ENCODE measurements at regions of chr4 and their contacts with region 1.

Region 1: DNA sequence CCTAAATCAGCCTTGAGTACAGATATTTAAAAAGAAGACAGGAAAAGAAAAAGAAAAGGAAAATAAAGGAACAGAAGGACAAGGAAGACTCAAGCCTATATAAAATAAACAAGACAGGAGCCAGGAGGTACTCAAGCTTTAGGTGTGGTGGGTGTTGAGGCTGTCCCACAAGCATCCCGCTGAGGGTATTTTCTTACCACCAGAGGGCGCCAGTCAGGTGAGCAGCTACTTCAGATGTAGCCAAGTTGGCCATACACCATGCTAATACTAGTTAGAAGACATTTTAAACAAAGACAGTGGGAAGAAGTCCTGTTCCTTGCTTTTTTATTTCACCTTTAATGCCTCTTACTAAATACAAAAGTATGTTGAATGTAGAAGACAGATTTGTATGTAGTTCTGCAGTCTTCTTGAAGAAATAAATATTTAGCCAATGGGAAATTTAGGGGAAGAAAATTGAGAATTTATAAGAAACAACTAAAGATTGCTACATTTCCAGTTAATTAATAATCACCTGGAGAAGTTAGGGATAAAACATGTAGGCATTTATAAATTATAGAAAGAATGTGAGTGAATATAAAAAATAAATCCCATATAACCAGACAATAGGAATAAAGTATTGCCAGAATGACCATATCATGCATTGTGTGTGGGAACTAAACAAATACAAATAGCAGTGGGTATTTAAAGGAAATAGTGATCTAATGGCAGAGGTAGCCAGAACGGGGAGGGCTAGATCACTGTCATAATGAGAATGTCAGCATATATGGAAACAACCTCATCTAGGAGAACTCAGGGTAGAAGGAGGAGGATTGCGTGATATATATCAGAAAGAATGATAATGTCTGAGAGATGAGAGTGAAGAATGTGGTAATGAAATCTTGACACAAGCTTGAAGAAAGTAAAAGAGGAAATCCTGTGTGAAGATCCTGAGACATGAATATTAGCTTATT is 71.0 kb downstream of the MTHFD2L start:
- DNase-seq: peak; percentile 31
- CTCF ChIP-seq: peak; percentile 73

Region 2: DNA sequence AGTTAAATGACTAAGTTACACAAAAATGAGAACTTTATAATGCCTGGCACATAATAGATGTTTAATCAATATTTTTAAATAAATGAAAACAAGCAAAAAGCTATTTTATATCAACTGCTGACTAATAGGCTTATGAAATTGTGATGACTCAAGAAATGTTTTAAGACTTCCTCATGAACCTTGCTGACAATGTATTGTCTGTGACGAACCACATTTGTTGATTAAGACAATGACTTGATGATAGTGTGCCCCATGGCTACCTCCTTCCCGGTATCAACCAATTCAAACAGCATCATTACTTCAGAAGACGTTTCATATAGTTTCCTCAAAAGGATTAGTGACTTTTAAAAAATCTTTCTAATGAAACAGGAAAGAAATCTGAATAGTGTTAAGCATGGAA is 384.6 kb before region 1 on chr4:
- CTCF ChIA-PET with region 1: no interaction called
- POLR2A ChIA-PET with region 1: no interaction called
- DNase-seq: no peak
- CTCF ChIP-seq: no peak

Region 3: GRCh38 chr4:74189331-74190043 is 39.5 kb before region 1 on chr4:
- CTCF ChIA-PET with region 1: interaction called, 12 read pairs
- POLR2A ChIA-PET with region 1: interaction called, 7 read pairs
- DNase-seq: peak; percentile 29
- CTCF ChIP-seq: peak; percentile 60

Region 4: DNA sequence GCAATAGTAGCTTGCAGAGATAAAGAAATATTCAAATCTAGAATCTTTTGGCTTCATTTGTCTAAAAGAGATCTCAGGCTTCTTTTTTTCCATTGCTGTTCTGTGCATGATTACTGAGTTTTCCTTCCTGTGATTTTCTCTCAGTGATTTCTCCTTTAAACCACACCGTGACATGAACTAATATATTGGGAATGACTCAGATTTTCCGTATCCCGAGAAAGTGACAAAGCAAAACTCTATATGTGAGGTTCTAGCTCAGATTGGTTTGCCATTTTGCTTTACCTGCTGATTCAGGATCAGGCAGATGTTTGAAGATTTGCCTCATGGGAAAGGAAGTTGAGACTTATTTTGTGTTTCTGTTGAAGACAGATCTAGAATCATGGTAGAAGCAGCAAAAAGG is 11.6 kb before region 1 on chr4:
- CTCF ChIA-PET with region 1: interaction called, 44 read pairs
- POLR2A ChIA-PET with region 1: no interaction called
- DNase-seq: no peak
- CTCF ChIP-seq: no peak

Region 5: DNA sequence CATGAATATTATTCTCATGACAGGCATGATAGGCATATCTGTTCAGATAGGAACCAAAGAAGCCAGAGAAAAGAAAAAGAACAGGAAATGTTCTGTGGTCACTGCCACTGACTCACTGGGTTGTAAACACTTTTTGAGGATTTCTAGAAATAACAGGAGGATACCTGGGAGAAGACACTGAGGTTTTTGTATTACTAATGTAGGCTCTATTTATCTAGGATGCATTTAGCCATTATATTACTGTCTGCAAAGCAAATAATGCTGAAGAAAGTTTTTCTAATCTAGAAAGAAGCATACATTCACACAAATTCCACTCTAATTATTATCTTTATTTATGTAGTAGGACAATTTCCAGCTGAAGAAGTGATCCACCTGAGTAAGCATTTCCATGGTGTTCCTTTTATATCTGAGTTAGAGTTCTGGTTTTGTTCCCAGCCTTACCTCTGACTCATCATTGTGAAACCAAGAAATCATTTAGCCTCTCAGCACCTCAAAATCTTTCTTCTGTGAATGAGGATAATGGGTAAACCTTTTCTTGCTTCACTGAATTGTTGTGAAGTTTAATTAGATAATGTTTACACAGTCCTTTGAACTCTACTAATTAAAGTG is 39.1 kb after region 1 on chr4:
- CTCF ChIA-PET with region 1: interaction called, 21 read pairs
- POLR2A ChIA-PET with region 1: no interaction called
- DNase-seq: no peak
- CTCF ChIP-seq: no peak

Region 6: DNA sequence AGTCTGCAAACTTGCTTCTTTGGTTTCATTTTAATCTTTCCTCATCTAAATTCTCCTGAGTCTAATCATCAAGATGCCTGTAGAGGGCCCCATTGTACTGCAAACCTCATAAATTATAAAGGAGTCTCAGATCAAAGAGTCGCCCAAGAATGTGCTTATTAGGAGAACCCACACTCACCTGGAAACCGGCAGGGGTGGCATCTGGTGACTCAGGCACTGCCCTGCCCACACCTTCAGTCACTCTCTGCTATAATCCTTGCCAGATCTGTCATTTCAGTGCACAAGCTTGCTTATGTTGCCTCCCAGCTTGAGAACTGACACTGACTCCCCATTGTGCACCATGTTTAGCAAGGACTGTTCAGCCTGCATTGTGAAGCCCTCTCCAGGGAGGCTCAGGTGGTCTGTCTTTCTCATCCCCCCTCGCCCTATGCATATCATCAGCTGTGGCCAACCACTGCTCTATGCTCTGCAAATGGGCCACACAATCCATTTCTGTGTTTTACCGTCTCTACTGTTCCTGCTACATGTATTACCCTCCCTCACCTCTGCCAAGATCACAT is 91.7 kb after region 1 on chr4:
- CTCF ChIA-PET with region 1: interaction called, 24 read pairs
- POLR2A ChIA-PET with region 1: no interaction called
- DNase-seq: peak; percentile 36
- CTCF ChIP-seq: peak; percentile 40